ENCODE measurements at regions of chr12 and their contacts with region 1.

Region 1: GRCh38 chr12:91326058-91327027 is 143.7 kb upstream of the DCN start:
- DNase-seq: peak in 2 of 5 donors; percentile 37 to 47
- ATAC-seq: peak in 2 of 4 donors; percentile 62 to 65
- H3K4me3 ChIP-seq: peak overlapping the region in 4 of 12 donors; percentile 4 to 17 (median 14)
- H3K27ac ChIP-seq: peak overlapping the region in 9 of 12 donors; percentile 13 to 70 (median 56)
- H3K4me1 ChIP-seq: peaks cover 0 to 10% (median 0%) of the 10 kb centered on the region in 12 donors
- H3K27me3 ChIP-seq: no peaks in the 10 kb centered on the region
- CTCF ChIP-seq: peak; percentile 56 to 85 (median 72)
- POLR2A ChIP-seq: no peak

Region 2: GRCh38 chr12:91172096-91172495 is 154.2 kb before region 1 on chr12:
- intact Hi-C with region 1: loop called in 7 of 10 experiments (anchors 1 to 5 kb)
- DNase-seq: no peak
- ATAC-seq: no peak
- H3K4me3 ChIP-seq: peak overlapping the region in 5 of 12 donors; percentile 0 to 61 (median 49)
- H3K27ac ChIP-seq: peak overlapping the region in 8 of 12 donors; percentile 22 to 87 (median 52)
- H3K4me1 ChIP-seq: peaks cover 0 to 11% (median 0%) of the 10 kb centered on the region in 12 donors
- H3K27me3 ChIP-seq: no peaks in the 10 kb centered on the region
- CTCF ChIP-seq: no peak
- POLR2A ChIP-seq: no peak

Region 3: GRCh38 chr12:91249518-91250272 is 76.6 kb before region 1 on chr12:
- intact Hi-C with region 1: loop called in 1 of 10 experiments (anchors 10 kb)
- DNase-seq: no peak
- ATAC-seq: peak in 3 of 4 donors; percentile 79 to 85 (median 83)
- H3K4me3 ChIP-seq: no peak overlapping the region
- H3K27ac ChIP-seq: peak overlapping the region; percentile 38 to 86 (median 65)
- H3K4me1 ChIP-seq: peaks cover 0 to 17% (median 0%) of the 10 kb centered on the region in 12 donors
- H3K27me3 ChIP-seq: no peaks in the 10 kb centered on the region
- CTCF ChIP-seq: no peak
- POLR2A ChIP-seq: no peak

Region 4: DNA sequence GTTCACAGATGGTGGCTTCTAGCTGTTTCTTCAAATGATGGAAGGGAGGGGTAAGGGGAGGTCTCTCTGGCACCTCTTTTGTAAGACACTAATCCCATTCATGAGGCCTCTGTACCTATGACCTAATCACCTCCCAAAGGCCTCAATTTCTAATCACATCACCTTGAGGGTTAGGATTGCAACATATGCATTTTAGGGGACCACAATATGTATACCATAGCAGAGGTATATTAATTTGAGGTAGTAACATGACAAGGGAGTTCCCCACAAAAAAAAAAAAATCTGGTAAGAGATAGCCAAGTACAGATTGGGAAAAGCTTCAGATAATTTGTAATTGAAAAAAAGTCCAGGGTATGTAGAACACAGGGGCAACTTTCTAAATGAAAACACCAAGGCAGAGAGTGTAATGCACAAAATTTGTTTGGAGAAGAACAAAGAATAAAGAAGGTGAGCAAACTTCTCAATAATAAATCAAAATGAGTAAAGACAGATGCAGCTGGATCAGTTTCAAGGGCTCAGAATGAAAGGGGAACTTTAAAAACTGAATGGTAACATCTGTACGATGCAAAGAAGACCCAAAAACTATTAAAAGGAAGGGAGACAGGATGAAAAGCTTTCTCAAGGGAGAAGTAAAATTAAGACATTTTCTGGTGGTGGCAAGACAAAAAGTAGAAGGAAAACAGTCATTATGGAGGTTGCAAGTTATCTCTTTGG is 18.2 kb before region 1 on chr12:
- intact Hi-C with region 1: no loop called
- DNase-seq: no peak
- ATAC-seq: no peak
- H3K4me3 ChIP-seq: no peak overlapping the region
- H3K27ac ChIP-seq: peak overlapping the region in 1 of 12 donors; percentile 35
- H3K4me1 ChIP-seq: peaks cover 0 to 7% (median 0%) of the 10 kb centered on the region in 12 donors
- H3K27me3 ChIP-seq: no peaks in the 10 kb centered on the region
- CTCF ChIP-seq: no peak
- POLR2A ChIP-seq: no peak

Region 5: GRCh38 chr12:91432089-91432488 is 105.7 kb after region 1 on chr12:
- intact Hi-C with region 1: no loop called
- DNase-seq: no peak
- ATAC-seq: peak in 1 of 4 donors; percentile 45
- H3K4me3 ChIP-seq: no peak overlapping the region
- H3K27ac ChIP-seq: no peak overlapping the region
- H3K4me1 ChIP-seq: peaks cover 0 to 5% (median 0%) of the 10 kb centered on the region in 12 donors
- H3K27me3 ChIP-seq: no peaks in the 10 kb centered on the region
- CTCF ChIP-seq: no peak
- POLR2A ChIP-seq: no peak